Head of caudate nucleus (tissue), 42 donors: ENCODE measurements at regions of chr9 and their contacts with region 1.

Region 1: DNA sequence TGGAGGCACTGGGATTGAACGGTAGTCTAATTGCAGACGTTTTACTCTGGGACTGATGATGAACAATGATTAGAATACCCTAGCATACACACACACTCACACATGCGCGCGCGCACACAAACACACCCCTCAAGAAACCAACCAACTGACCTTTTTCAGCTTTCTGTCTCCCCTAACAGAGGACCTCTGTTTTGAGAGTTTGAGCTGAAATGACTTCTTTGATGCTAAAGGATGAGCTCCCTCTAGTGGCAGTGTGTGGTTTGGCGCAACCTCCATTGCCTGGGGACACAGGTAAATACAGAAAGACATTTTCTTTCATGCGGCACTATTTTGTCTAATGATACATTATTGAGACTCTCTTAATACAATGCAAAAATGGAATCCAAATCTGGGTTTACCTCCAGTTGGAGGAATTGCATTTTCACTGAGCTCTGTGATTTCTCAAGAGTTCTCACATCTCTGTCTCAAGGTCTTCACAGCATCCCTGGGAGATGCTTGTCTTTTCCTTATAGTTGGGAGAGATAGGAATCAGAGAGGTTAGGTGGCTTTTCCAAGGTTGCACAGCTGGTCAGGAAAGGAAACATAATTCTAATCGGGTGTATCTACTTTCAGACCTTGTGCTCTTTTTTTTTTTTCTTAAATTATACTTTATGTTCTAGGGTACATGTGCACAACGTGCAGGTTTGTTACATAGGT is 187.5 kb downstream of the TMEM38B start:
- DNase-seq: peak; percentile 12 to 92 (median 80)

Region 2: DNA sequence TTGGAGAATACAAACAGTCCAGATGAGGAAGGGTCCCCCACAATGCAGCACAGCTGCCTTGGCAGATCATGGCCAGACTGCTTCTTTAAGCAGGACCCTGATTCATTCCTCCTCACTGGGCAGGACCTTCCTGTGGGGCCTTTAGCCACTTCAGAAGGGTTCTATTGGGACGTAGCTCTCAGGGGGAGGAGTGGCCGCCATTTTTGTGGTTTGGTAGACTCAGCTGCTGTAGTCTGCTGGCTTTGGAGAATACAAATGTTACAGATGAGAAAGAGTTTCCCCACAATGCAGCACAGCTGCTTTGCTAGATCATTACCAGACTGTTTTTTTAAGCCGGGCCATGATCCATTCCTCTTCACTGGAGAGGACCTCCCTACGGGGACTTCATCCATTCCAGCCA is 130.0 kb before region 1 on chr9:
- intact Hi-C with region 1: no loop called
- DNase-seq: no peak

Region 3: GRCh38 chr9:105842023-105842644 is 39.7 kb before region 1 on chr9:
- intact Hi-C with region 1: loop called (anchors 5 kb)
- DNase-seq: peak in 35 of 42 donors; percentile 4 to 85 (median 55)

Region 4: DNA sequence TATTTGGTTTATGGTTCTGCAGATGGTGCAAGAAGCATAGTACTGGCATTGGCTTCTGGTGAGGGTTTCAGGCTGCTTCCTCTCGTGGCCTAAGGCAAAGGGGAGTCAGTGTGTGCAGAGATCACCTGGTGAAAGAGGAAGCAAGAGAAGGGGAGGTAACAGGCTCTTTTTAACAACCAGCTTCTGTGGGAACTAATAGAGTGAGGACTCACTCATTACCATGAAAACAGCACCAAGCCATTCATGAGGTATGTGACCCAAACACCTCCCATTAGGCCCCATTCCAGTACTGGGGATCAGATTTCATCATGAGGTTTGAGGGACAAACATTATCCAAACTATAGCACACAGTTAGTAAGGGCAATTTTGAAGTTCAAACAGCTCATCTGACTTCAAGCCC is 76.0 kb after region 1 on chr9:
- intact Hi-C with region 1: no loop called
- DNase-seq: no peak

Region 5: GRCh38 chr9:106058460-106058859 is 176.7 kb after region 1 on chr9:
- intact Hi-C with region 1: no loop called
- DNase-seq: no peak